ENCODE measurements at regions of chr14 and their contacts with region 1.

Region 1: DNA sequence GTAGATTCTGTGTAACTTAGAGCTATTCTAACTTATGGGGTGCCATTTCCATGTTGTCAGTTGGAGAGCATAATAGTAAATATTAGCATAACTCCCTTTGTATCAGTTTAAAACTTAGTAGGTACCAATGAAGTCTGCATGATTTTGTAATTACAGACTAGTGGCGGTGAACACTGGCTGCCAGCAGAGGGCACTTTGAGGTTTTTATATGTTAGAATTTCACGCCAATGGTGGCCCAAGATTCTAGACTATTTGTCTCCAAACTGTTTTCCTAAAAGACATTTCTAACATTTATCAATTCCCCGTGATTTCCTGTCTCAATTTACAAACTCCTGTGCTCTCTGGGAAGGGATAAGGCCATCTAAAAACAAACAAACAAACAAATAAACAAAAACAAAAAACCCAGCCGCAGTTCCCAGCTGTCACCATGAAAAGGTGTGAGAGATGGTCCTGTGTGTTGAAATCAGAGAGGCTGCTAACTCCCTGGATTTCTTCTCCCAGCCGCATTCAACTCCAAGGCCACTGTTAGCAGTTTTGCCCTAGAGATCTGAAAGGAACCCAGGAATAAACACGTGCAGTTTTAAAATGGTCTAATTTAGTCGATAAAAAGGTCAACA is 57.6 kb downstream of the BRMS1L start:
- DNase-seq: no peak
- H3K4me3 ChIP-seq: no peak overlapping the region
- H3K27ac ChIP-seq: no peak overlapping the region
- H3K4me1 ChIP-seq: no peaks in the 10 kb centered on the region
- H3K27me3 ChIP-seq: no peaks in the 10 kb centered on the region
- CTCF ChIP-seq: peak in 2 of 3 experiments; percentile 59 to 66; a peak in 3 of 4 replicates
- EP300 ChIP-seq: no peak
- POLR2A ChIP-seq: no peak
- RAD21 ChIP-seq: peak; percentile 36 to 50

Region 2: GRCh38 chr14:35687335-35687939 is 196.3 kb before region 1 on chr14:
- CTCF ChIA-PET with region 1: no interaction called
- POLR2A ChIA-PET with region 1: no interaction called
- DNase-seq: no peak
- H3K4me3 ChIP-seq: no peak overlapping the region
- H3K27ac ChIP-seq: no peak overlapping the region
- H3K4me1 ChIP-seq: no peaks in the 10 kb centered on the region
- H3K27me3 ChIP-seq: no peaks in the 10 kb centered on the region
- CTCF ChIP-seq: peak in 2 of 3 experiments; percentile 72 to 75; a peak in 3 of 4 replicates
- EP300 ChIP-seq: no peak
- POLR2A ChIP-seq: no peak
- RAD21 ChIP-seq: peak; percentile 96 to 97

Region 3: GRCh38 chr14:35897616-35898111 is 13.9 kb after region 1 on chr14:
- CTCF ChIA-PET with region 1: interaction called, 25 read pairs
- POLR2A ChIA-PET with region 1: no interaction called
- DNase-seq: no peak
- H3K4me3 ChIP-seq: no peak overlapping the region
- H3K27ac ChIP-seq: no peak overlapping the region
- H3K4me1 ChIP-seq: peaks cover 0 to 8% (median 3%) of the 10 kb centered on the region in 4 experiments; a peak in 3 of 7 replicates
- H3K27me3 ChIP-seq: no peaks in the 10 kb centered on the region
- CTCF ChIP-seq: no peak
- EP300 ChIP-seq: no peak
- POLR2A ChIP-seq: no peak
- RAD21 ChIP-seq: no peak

Region 4: GRCh38 chr14:35956376-35957085 is 72.7 kb after region 1 on chr14:
- CTCF ChIA-PET with region 1: interaction called, 24 read pairs
- POLR2A ChIA-PET with region 1: no interaction called
- DNase-seq: no peak
- H3K4me3 ChIP-seq: no peak overlapping the region
- H3K27ac ChIP-seq: no peak overlapping the region
- H3K4me1 ChIP-seq: peaks cover 0 to 3% (median 1%) of the 10 kb centered on the region in 4 experiments; a peak in 2 of 7 replicates
- H3K27me3 ChIP-seq: no peaks in the 10 kb centered on the region
- CTCF ChIP-seq: no peak
- EP300 ChIP-seq: no peak
- POLR2A ChIP-seq: no peak
- RAD21 ChIP-seq: no peak

Measured in H1 (cell line).